ENCODE measurements at regions of chr9 and their contacts with region 1.

Region 1: DNA sequence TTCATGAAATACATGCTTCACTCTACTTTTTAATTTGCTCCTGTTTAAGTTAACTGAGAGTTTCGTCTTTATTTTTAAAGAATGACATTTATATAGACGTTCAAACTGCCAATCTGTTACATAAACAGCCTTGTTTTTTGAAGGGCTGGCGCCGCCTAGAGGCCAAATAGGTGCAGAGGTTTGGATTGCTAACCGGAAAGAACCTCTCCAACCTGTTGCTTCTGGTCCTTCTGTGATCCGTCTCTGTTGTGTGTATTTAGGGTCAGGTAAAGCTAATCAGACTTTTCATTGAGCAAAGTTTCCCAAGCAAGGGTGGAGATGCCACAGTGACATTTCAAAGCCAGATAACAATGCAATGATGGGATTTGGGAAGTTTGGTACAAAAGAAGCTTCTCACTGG is 39.5 kb upstream of the GLIS3 start:
- DNase-seq: peak; percentile 20
- H3K4me3 ChIP-seq: no peak overlapping the region
- H3K27me3 ChIP-seq: no peaks in the 10 kb centered on the region
- CTCF ChIP-seq: peak; percentile 97

Region 2: GRCh38 chr9:4211032-4211725 is 128.2 kb before region 1 on chr9:
- CTCF ChIA-PET with region 1: no interaction called
- POLR2A ChIA-PET with region 1: no interaction called
- DNase-seq: no peak
- H3K4me3 ChIP-seq: no peak overlapping the region
- H3K27me3 ChIP-seq: no peaks in the 10 kb centered on the region
- CTCF ChIP-seq: no peak

Region 3: DNA sequence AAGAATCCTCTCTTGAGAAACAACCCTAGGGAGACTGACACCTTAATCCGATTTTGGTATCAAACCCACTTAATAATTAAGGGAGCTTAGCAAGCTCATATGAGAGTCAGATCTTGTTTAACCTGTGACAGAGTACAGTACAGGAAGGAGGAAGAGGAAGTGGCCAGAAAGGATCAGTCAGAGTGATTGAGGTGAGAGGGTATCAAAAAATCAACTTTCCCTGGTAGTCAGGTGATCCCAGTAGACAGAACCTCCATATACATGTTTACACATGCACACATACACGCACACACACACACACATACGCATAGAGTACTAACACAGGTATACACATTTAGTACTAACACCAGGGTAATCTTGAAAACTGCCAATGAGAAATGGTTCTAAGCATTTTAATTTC is 96.2 kb before region 1 on chr9:
- CTCF ChIA-PET with region 1: no interaction called
- POLR2A ChIA-PET with region 1: no interaction called
- DNase-seq: no peak
- H3K4me3 ChIP-seq: no peak overlapping the region
- H3K27me3 ChIP-seq: no peaks in the 10 kb centered on the region
- CTCF ChIP-seq: no peak

Region 4: GRCh38 chr9:4327504-4328191 is 11.7 kb before region 1 on chr9:
- CTCF ChIA-PET with region 1: interaction called, 36 read pairs
- POLR2A ChIA-PET with region 1: no interaction called
- DNase-seq: no peak
- H3K4me3 ChIP-seq: no peak overlapping the region
- H3K27me3 ChIP-seq: no peaks in the 10 kb centered on the region
- CTCF ChIP-seq: no peak

Region 5: DNA sequence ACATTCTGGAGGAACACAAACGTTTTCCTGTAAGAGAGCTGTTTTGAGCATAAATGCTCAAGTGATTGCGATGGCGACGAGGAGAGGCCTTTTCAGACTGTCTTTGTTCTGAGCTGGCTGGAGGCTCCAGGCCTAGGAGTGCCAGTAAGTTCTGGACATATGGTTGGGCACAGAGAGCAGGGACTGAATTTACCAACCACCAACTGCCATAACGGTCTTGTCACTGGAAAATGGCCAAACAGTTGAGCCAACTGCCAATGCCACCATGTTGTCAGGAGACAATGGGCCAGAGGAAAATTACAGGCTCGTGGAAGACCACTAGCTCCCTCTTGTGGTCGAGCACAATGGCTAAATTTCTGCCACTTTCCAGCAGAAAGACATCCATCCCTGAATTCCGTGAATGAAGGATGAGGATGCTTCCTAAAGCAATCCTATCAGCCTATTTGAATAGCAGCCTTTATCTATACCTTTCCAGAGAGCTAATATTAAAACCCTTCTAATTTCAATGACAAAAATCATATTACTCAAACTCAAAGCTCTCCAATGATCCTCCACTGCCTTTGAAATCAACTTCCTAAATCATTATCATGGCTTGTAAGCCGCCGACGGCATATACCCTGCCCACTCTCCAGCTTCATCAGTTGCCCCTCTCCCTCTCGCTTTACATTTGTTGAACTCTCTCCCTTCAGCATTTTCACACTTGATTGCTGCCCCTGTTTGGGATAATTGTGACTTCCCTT is 27.4 kb after region 1 on chr9:
- CTCF ChIA-PET with region 1: interaction called, 10 read pairs
- POLR2A ChIA-PET with region 1: no interaction called
- DNase-seq: no peak
- H3K4me3 ChIP-seq: no peak overlapping the region
- H3K27me3 ChIP-seq: peaks cover 2% of the 10 kb centered on the region
- CTCF ChIP-seq: peak; percentile 87